ENCODE measurements at regions of chr1 and their contacts with region 1.

Region 1: GRCh38 chr1:45348716-45349677 is 8.8 kb upstream of the MUTYH start:
- DNase-seq: peak; percentile 83
- H3K4me3 Mint-ChIP-seq: peak overlapping the region; percentile 28
- H3K27ac Mint-ChIP-seq: peak overlapping the region; percentile 52
- H3K4me1 Mint-ChIP-seq: peaks cover 21% of the 10 kb centered on the region
- H3K27me3 Mint-ChIP-seq: no peaks in the 10 kb centered on the region
- CTCF ChIP-seq: no peak

Region 2: DNA sequence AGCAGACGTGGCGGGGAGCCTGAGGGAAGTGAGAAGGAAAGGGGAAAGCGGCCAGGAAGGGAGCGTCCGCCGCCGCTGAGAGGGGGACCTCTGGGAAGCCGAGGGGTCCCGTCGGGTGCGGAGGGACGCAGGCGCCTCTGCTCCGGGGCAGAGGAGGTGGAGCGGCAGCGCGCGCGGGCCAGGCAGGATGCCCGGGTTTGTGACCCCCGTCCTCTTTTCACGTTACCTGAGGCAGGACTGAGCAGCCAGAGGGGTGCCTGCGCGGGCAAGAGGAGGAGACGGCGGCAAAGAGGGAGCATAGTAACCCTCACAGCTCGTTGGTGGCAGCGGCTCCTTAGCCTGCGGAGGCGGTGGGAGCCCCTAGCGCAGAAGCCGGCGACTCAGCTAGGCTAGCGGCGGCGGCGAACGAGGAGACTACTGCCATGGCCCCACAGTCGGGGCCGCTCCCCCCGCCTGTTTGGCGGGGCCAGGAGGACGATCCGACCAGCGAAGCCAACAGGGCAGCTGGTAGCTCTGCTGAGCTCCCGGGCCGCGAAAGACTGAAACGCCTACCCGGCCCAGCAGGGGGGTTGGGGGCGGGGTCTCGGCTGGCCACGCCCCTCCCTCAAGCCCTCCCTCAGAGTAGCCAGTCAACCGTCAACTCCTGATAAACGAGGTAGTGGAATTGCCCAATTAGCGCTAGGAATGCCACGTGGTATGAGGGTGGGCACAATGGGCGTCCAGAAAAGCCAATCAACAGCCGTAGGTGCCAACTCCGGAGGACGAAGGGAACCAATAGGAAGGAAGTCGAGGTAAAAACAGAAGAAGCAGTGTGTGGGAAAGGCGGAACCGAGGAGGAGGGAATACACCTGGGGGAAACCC is 141.9 kb after region 1 on chr1 and contains the start of gene TESK2:
- CTCF ChIA-PET with region 1: interaction called, 51 read pairs
- POLR2A ChIA-PET with region 1: interaction called, 34 read pairs
- intact Hi-C with region 1: no loop called
- DNase-seq: peak; percentile 100
- H3K4me3 Mint-ChIP-seq: no peak within 1 kb of the TSS
- H3K27ac Mint-ChIP-seq: no peak within 1 kb of the TSS
- H3K4me1 Mint-ChIP-seq: peaks cover 5% of the 10 kb centered on the region
- H3K27me3 Mint-ChIP-seq: no peaks in the 10 kb centered on the region
- CTCF ChIP-seq: no peak
- total RNA-seq, gene TESK2: 0.71 and 1.4 TPM in 2 replicates

Region 3: DNA sequence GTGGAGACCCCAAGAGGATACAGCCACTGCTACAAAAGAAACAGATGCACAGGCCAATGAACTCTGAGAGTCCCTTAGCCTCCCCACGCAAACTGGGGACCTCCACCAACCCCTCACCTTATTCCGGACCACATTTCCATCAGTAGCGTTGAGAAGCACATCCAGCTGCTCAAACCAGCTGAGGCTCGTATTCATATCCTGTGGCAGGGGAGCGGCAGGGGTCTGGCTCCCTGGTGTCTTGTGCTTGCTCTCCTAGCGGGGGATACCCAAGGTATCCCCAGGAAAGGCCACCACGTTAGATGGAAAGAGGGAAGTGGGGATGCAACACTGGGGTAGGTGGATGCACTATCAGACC is 150.4 kb after region 1 on chr1:
- CTCF ChIA-PET with region 1: interaction called, 9 read pairs
- POLR2A ChIA-PET with region 1: interaction called, 26 read pairs
- intact Hi-C with region 1: no loop called
- DNase-seq: no peak
- H3K4me3 Mint-ChIP-seq: peak overlapping the region; percentile 97
- H3K27ac Mint-ChIP-seq: peak overlapping the region; percentile 94
- H3K4me1 Mint-ChIP-seq: peaks cover 26% of the 10 kb centered on the region
- H3K27me3 Mint-ChIP-seq: no peaks in the 10 kb centered on the region
- CTCF ChIP-seq: no peak

Region 4: GRCh38 chr1:45583264-45583665 is 234.3 kb after region 1 on chr1:
- CTCF ChIA-PET with region 1: no interaction called
- POLR2A ChIA-PET with region 1: interaction called, 11 read pairs
- intact Hi-C with region 1: no loop called
- DNase-seq: peak; percentile 97
- H3K4me3 Mint-ChIP-seq: peak overlapping the region; percentile 89
- H3K27ac Mint-ChIP-seq: peak overlapping the region; percentile 68
- H3K4me1 Mint-ChIP-seq: peaks cover 15% of the 10 kb centered on the region
- H3K27me3 Mint-ChIP-seq: no peaks in the 10 kb centered on the region
- CTCF ChIP-seq: no peak